ENCODE measurements at regions of chr5 and their contacts with region 1.

Region 1: GRCh38 chr5:132883261-132883834 is 9.9 kb downstream of the LEAP2 start:
- DNase-seq: peak; percentile 48
- ATAC-seq: peak; percentile 67
- H3K4me3 Mint-ChIP-seq: no peak overlapping the region
- H3K27ac Mint-ChIP-seq: no peak overlapping the region
- H3K4me1 Mint-ChIP-seq: no peaks in the 10 kb centered on the region
- H3K27me3 Mint-ChIP-seq: no peaks in the 10 kb centered on the region

Region 2: DNA sequence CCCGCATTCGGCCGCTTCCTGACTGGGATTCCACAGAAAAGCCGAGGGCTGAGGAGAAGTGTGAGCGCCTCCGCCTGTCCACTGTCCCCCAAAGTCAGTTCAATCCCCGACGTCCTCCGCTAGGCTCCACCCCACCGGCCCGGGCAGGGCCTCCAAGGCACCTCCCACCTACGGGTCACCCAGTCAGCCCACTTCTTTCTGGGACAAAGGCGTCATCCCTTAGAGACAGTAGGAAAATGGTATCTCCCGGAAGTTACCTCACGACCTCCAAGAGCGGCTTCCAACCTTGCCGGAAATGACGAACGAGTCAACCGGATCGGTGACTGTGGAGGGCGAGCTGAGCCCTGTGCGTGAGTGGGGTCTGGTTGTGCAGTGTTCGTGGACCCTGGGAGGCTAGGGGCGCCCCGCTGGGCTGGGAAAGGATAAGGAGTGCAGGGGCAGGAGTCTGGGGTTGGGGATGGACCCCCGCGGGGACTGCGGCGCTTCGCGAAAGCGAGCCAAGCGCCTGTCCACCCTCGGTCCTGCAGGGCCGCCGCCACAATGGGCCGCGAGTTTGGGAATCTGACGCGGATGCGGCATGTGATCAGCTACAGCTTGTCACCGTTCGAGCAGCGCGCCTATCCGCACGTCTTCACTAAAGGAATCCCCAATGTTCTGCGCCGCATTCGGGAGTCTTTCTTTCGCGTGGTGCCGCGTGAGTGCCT is 16.9 kb before region 1 on chr5 and contains the starts of genes GDF9 and UQCRQ:
- CTCF ChIA-PET with region 1: interaction called, 20 read pairs
- POLR2A ChIA-PET with region 1: interaction called, 3 read pairs
- DNase-seq: peak; percentile 97
- ATAC-seq: peak; percentile 99
- H3K4me3 Mint-ChIP-seq: peak within 1 kb of the TSS; percentile 98
- H3K27ac Mint-ChIP-seq: peak within 1 kb of the TSS; percentile 99
- H3K4me1 Mint-ChIP-seq: peaks cover 23% of the 10 kb centered on the region
- H3K27me3 Mint-ChIP-seq: peaks cover 3% of the 10 kb centered on the region
- total RNA-seq, gene GDF9: 0.52 to 0.92 TPM
- total RNA-seq, gene UQCRQ: 381 to 396 TPM

Region 3: DNA sequence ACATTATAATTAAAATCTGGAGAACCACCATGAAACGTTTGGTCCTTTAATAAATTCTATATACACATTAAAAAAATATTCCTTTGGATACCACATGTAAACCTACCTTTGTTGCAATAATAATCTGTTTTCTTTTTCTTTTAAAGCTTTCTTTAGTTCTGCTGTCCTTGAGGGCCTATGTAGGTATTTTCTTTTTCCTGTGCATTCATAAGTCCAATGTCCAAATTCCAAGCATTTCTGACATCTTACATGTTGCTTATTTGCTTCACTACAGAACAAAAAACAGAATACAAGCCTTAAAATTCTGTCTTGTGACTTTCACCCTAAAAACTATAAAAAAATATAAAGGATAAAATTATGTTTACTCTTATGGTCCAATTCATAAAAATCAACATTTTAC is 123.3 kb after region 1 on chr5:
- CTCF ChIA-PET with region 1: no interaction called
- POLR2A ChIA-PET with region 1: no interaction called
- DNase-seq: no peak
- ATAC-seq: no peak
- H3K4me3 Mint-ChIP-seq: no peak overlapping the region
- H3K27ac Mint-ChIP-seq: no peak overlapping the region
- H3K4me1 Mint-ChIP-seq: no peaks in the 10 kb centered on the region
- H3K27me3 Mint-ChIP-seq: no peaks in the 10 kb centered on the region

Measured in activated CD8-positive, alpha-beta T cell treated with anti-CD3 and anti-CD28 coated beads, Interleukin-2, amount 10 ng/mL, durations not matched to agents 7 days and 5 days (primary cell).